OCI-LY7 (cell line): ENCODE measurements at regions of chr6 and their contacts with region 1.

Region 1: DNA sequence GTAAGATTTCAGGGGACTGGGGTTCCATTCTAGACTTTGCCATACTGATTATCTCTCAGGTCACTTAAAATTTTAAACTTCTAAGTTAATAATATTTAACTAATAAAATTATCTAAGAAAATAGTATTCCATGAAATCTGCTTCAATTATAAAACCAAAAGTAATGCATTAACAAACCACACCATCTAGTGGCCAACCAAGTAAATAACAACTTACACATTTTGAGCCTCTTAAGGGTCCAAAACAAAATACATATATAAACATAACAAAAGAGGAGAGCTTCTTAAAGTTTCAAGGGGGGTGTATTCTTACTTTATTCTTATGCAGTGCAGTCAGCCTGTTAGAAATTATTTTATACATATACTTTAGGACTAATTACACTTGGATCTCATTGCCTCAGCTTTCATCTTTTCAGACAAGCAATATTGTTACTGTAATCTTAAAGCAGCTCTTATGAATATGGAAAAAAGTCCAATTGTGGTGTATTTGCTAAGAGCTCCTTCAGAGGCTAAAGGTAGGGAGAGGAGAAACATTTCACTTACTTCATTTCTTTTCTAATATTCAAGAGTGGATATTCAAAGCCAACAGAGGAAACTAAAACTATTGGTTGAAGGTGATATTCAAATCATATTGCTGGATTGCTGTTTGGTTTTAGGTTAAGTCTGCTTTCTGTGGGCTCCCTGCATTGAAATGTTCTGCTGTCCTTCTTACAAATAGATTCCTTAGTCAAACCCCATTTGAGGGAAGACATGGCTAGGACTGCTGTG is 199.7 kb upstream of the SIM1 start:
- DNase-seq: peak; percentile 41
- H3K4me3 ChIP-seq: no peak overlapping the region
- H3K27ac ChIP-seq: no peak overlapping the region
- H3K4me1 ChIP-seq: no peaks in the 10 kb centered on the region
- CTCF ChIP-seq: peak; percentile 84

Region 2: DNA sequence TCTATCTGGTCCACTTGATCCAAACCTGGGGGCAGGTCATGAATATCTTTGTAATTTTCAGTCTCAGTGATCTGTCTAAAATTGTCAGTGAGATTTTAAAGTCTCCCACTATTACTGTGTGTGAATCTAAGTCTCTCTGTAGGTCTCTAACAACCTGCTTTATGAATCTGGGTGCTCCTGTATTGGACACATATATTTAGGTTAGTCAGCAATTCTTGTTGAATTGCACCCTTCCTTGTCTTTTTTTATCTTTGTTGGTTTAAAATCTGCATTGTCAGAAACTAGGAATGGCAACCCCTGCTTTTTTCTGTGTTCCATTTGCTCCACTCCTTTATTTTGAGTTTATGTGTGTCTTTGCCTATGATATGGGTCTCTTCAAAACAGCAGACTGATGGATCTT is 76.0 kb after region 1 on chr6:
- CTCF ChIA-PET with region 1: no interaction called
- POLR2A ChIA-PET with region 1: no interaction called
- intact Hi-C with region 1: no loop called
- DNase-seq: no peak
- H3K4me3 ChIP-seq: no peak overlapping the region
- H3K27ac ChIP-seq: no peak overlapping the region
- H3K4me1 ChIP-seq: no peaks in the 10 kb centered on the region
- CTCF ChIP-seq: no peak

Region 3: DNA sequence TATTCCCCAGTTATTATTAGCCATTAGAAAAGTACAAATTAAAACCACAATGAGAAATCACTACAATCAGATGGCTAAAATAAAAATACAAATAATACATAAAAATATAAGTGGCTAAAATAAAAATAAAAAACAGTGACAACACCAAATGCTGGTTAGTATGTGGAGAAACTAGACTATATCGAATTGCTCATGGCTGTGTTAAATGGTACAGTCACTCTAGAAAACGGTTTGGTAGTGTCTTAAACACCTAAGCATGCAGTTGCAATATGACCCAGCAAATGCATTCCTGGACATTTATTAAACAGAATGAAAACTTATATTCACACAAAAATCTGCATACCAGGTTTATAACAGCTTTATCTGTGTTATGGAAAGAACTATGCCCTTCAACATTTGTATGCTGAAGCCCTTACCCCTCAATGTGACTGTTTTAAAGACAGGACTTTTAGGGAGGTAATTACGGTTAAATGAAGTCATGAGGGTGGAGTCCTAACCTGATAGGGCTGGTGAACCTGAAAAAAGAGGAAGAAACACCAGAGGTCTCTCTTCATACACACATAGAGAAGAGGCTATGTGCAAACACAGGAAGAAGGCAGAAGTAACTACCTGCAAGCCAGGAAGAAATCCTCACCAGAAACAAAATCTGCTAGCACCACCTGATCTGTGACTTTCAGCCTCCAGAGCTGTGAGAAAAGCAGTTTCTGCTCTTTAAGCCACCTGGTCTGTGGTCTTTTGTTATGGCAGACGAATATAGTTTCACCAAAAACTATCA is 131.8 kb after region 1 on chr6:
- CTCF ChIA-PET with region 1: no interaction called
- POLR2A ChIA-PET with region 1: no interaction called
- intact Hi-C with region 1: no loop called
- DNase-seq: peak; percentile 75
- H3K4me3 ChIP-seq: no peak overlapping the region
- H3K27ac ChIP-seq: peak overlapping the region; percentile 50
- H3K4me1 ChIP-seq: peaks cover 10% of the 10 kb centered on the region
- CTCF ChIP-seq: peak; percentile 65

Region 4: GRCh38 chr6:101231606-101232235 is 567.3 kb after region 1 on chr6:
- CTCF ChIA-PET with region 1: no interaction called
- POLR2A ChIA-PET with region 1: no interaction called
- intact Hi-C with region 1: loop called (anchors 10 kb)
- DNase-seq: no peak
- H3K4me3 ChIP-seq: no peak overlapping the region
- H3K27ac ChIP-seq: no peak overlapping the region
- H3K4me1 ChIP-seq: no peaks in the 10 kb centered on the region
- CTCF ChIP-seq: no peak